ENCODE measurements at regions of chr3 and their contacts with region 1.

Region 1: GRCh38 chr3:46378426-46378942 is 7.7 kb downstream of the CCR5 start:
- DNase-seq: peak; percentile 66 to 83 (median 83)
- ATAC-seq: peak in 1 of 2 donors; percentile 58
- H3K4me3 ChIP-seq: no peak overlapping the region
- H3K27ac ChIP-seq: no peak overlapping the region
- H3K4me1 ChIP-seq: no peaks in the 10 kb centered on the region
- H3K27me3 ChIP-seq: no peaks in the 10 kb centered on the region

Region 2: GRCh38 chr3:46089237-46090011 is 289.1 kb before region 1 on chr3:
- intact Hi-C with region 1: loop called in 1 of 4 experiments (anchors 10 kb)
- DNase-seq: peak; percentile 67 to 76 (median 75)
- ATAC-seq: peak; percentile 84 to 89
- H3K4me3 ChIP-seq: no peak overlapping the region
- H3K27ac ChIP-seq: peak overlapping the region; percentile 8
- H3K4me1 ChIP-seq: peaks cover 2% of the 10 kb centered on the region
- H3K27me3 ChIP-seq: no peaks in the 10 kb centered on the region

Region 3: DNA sequence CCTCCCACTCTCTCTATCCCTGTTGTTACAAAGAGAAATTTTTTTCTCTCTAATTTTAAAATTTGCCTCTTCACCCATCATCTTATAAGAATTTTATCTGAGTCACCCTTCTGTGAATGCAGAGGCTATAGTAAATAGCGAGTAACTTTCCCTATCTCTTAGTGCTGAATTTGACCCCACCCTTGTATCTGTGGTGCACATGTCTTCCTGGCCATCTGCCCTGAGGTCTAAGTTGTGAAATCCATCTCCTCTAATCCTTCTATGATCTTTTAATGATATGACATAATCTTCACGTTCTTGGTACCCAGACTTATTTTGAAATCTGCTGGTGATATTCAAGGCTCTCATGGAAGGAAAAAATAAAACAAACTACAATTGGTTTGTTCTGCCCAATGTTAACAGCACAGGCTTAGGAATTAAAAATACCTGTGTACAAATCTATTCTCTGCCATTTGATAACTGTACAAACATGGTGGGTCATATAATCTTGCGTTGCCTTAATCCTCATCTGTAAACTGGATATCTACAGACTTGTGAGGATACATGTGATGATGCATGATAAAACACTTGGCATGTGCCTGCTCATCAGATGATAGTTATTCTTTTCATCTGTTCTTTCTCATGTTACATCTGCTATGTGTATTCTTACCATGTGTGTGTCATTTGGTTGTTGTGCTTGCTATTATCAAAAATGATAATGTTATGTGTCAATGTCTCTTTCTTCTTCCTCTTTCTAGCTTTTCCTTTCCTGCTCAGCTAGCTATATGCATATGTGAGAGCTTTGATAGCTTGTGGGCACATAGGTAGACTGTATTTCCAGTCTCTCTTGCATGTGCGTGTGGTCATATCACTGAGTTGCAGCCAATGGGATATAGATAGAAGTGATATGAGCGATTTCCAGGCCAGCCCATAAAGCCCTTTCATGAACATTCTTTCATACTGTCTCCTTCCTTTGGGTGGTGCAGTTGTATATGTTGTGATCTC is 149.9 kb before region 1 on chr3:
- intact Hi-C with region 1: no loop called
- DNase-seq: no peak
- ATAC-seq: no peak
- H3K4me3 ChIP-seq: no peak overlapping the region
- H3K27ac ChIP-seq: no peak overlapping the region
- H3K4me1 ChIP-seq: no peaks in the 10 kb centered on the region
- H3K27me3 ChIP-seq: no peaks in the 10 kb centered on the region